ENCODE measurements at regions of chr14 and their contacts with region 1.

Region 1: GRCh38 chr14:92719890-92720323 is 28.5 kb downstream of the LGMN start:
- DNase-seq: peak; percentile 34 to 38
- H3K4me3 ChIP-seq: no peak overlapping the region
- H3K4me3 Mint-ChIP-seq: no peak overlapping the region
- H3K27ac Mint-ChIP-seq: peak overlapping the region; percentile 42
- H3K4me1 ChIP-seq: peaks cover 29% of the 10 kb centered on the region
- H3K4me1 Mint-ChIP-seq: peaks cover 19% of the 10 kb centered on the region
- H3K27me3 ChIP-seq: no peaks in the 10 kb centered on the region
- H3K27me3 Mint-ChIP-seq: no peaks in the 10 kb centered on the region
- CTCF ChIP-seq: no peak

Region 2: DNA sequence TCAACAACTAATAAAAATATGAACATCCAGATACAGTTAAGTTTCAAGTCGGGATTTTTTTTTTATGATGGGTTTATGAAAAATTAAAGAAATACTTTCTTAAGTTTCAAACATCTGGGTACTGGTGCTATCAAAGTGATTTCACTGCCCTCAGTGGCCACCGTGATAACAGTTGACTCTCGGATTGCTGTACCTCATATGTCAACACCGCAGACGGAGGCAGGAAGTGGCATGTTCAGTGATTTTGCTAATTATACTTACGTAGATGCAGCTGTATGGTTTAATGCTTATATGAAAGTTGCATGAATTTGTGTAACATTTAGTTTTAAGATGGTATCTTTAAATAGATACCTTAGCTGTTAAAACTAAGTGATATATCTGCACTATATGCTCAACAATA is 751.6 kb before region 1 on chr14:
- CTCF ChIA-PET with region 1: interaction called, 11 read pairs
- POLR2A ChIA-PET with region 1: no interaction called
- intact Hi-C with region 1: no loop called
- DNase-seq: no peak
- H3K4me3 ChIP-seq: no peak overlapping the region
- H3K4me3 Mint-ChIP-seq: no peak overlapping the region
- H3K27ac Mint-ChIP-seq: no peak overlapping the region
- H3K4me1 ChIP-seq: no peaks in the 10 kb centered on the region
- H3K4me1 Mint-ChIP-seq: no peaks in the 10 kb centered on the region
- H3K27me3 ChIP-seq: no peaks in the 10 kb centered on the region
- H3K27me3 Mint-ChIP-seq: no peaks in the 10 kb centered on the region
- CTCF ChIP-seq: no peak

Region 3: GRCh38 chr14:92737206-92737605 is 17.3 kb after region 1 on chr14:
- CTCF ChIA-PET with region 1: no interaction called
- POLR2A ChIA-PET with region 1: no interaction called
- intact Hi-C with region 1: no loop called
- DNase-seq: no peak
- H3K4me3 ChIP-seq: no peak overlapping the region
- H3K4me3 Mint-ChIP-seq: no peak overlapping the region
- H3K27ac Mint-ChIP-seq: no peak overlapping the region
- H3K4me1 ChIP-seq: peaks cover 4% of the 10 kb centered on the region; the same call in 1 of the 2 replicates
- H3K4me1 Mint-ChIP-seq: peaks cover 15% of the 10 kb centered on the region
- H3K27me3 ChIP-seq: no peaks in the 10 kb centered on the region
- H3K27me3 Mint-ChIP-seq: no peaks in the 10 kb centered on the region
- CTCF ChIP-seq: no peak

Measured in Caco-2 (cell line).